ENCODE measurements at regions of chr5 and their contacts with region 1.

Region 1: DNA sequence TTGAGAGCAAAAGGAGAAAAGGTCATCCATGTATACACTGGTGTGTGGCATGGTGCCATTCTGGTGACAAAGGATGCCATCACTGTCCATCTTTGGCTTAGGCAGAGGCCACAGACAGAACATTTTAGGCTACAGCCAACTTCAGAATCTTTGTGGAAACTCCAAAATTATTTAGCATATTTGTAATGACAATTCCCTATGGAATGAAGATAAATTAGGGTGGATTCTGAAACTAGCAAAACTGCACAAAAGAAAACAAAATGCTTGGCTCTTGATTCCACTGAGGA is 92.5 kb downstream of the FBXW11 start:
- DNase-seq: no peak
- H3K4me3 ChIP-seq: no peak overlapping the region
- H3K27ac ChIP-seq: no peak overlapping the region
- H3K4me1 ChIP-seq: peaks cover 2 to 21% (median 7%) of the 10 kb centered on the region in 4 experiments
- H3K27me3 ChIP-seq: no peaks in the 10 kb centered on the region

Region 2: DNA sequence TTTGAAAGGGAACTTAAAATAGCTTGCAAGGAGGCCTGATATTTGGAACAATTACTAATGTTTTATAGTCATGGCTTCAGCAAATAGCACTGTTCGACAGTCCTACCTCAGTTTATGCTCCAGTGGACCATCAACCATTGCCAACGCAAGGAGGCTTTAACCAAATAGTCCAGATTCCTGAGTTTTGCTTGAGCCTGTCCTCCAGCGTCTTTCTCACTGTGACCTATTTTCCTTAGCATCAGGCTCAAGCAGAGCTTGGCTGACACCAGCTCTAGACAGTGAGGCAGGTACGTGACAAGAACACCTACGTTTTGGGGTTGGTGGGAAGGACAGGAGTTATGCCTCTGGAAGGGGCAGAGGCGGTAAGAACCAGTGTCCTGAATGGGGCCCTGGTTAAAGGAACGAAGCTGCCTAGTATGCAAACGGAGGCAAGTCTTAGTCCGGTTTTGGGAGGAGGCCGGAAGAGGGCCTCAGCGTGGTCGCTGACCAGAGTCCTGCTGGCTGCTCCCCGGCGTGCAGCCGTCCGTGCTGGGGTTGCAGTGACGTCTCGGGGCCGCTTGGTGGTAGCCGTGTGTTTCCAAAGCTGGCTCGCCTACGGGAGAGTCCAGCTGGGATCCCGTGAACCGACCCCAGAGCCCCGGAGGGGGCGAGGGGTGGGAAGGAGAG is 495.5 kb before region 1 on chr5:
- CTCF ChIA-PET with region 1: interaction called, 118 read pairs
- POLR2A ChIA-PET with region 1: no interaction called
- DNase-seq: peak; percentile 46 to 62 (median 61)
- H3K4me3 ChIP-seq: peak overlapping the region; percentile 19 to 83 (median 57)
- H3K27ac ChIP-seq: no peak overlapping the region
- H3K4me1 ChIP-seq: peaks cover 0 to 28% (median 25%) of the 10 kb centered on the region in 4 experiments
- H3K27me3 ChIP-seq: peaks cover 0 to 25% (median 10%) of the 10 kb centered on the region in 5 experiments

Region 3: GRCh38 chr5:172035039-172035438 is 121.1 kb after region 1 on chr5:
- CTCF ChIA-PET with region 1: interaction called, 97 read pairs
- POLR2A ChIA-PET with region 1: no interaction called
- DNase-seq: peak in 2 of 3 donors; percentile 25 to 29
- H3K4me3 ChIP-seq: peak overlapping the region in 1 of 7 experiments; percentile 18
- H3K27ac ChIP-seq: no peak overlapping the region
- H3K4me1 ChIP-seq: peaks cover 3 to 9% (median 6%) of the 10 kb centered on the region in 4 experiments
- H3K27me3 ChIP-seq: no peaks in the 10 kb centered on the region

Region 4: GRCh38 chr5:172059661-172060100 is 145.8 kb after region 1 on chr5:
- CTCF ChIA-PET with region 1: interaction called, 42 read pairs
- POLR2A ChIA-PET with region 1: no interaction called
- DNase-seq: peak; percentile 21 to 43 (median 35)
- H3K4me3 ChIP-seq: no peak overlapping the region
- H3K27ac ChIP-seq: no peak overlapping the region
- H3K4me1 ChIP-seq: peaks cover 0 to under 1% (median 0%) of the 10 kb centered on the region in 4 experiments
- H3K27me3 ChIP-seq: no peaks in the 10 kb centered on the region

Region 5: DNA sequence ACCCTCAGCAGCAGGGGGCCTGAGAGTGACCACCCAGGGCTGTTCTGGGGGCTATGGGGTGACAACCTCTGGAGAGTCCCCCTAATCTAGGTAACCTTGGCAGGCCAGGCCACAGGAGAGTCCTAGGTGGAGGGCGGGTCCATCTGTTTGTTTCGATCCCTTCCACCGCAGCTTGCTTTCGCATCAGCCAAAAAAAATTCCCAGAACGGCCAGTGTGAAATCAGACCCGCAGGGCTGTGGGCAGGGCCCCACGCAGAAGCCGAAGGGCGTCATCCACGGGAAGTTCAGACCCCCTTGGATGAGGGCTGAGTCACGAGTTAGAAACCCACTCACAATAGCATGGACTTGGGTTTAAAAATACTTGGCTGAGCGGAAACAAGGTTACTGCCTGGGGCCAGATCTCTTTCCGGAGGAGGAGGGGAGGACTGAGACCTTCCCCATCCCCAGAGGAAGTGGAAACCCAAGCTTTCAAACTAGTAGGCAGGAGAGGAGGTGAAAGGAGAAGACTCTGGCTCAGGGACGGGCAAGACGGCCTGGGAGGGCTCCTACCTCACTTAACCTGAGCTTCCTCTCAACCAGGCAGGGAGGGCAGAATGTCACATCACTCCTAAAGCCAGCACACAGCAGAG is 265.5 kb after region 1 on chr5:
- CTCF ChIA-PET with region 1: no interaction called
- POLR2A ChIA-PET with region 1: no interaction called
- DNase-seq: peak; percentile 85 to 89 (median 87)
- H3K4me3 ChIP-seq: peak overlapping the region in 6 of 7 experiments; percentile 19 to 71 (median 54)
- H3K27ac ChIP-seq: peak overlapping the region; percentile 77 to 88
- H3K4me1 ChIP-seq: peaks cover 38 to 95% (median 81%) of the 10 kb centered on the region in 4 experiments
- H3K27me3 ChIP-seq: no peaks in the 10 kb centered on the region